ENCODE measurements at regions of chr15 and their contacts with region 1.

Region 1: DNA sequence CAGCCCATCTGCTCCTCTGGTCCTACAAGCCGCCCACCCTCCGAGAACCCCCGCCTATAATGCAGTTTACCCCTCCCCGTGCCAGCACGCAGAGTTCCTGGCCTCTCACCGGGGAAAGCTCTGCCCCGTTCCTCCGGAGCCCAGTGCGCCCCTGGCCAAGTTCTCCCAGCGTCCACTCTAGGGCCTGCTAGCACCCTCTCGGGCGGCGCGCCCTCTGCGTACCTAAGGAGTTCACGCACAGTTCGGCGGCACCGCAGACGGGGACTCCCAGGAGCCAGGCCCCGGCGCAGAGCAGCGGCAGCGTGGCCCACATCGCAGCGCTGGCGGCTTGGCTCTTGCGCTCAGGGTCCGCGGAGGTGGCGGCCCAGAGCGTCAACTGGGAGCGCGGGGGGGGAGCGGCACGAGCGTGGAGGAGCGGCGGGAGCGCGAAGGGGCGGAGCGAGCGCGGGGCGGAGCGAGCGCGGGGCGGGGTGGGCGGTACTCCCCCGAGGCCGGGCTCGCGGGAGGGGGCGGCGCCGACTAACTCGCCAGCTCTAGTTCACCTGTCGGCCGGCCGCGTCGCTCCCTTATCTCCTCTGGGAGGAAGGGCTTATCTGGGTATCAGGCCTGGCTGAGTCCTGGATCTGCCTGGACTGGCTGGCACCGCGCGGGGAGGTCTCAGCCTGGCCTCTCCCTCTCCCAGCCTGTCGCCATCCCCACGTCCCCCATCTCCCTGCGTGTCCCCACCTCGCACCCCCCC is at the start of gene CTSH:
- DNase-seq: peak; percentile 91
- ATAC-seq: peak; percentile 95
- H3K4me3 Mint-ChIP-seq: peak within 1 kb of the TSS; percentile 98
- H3K27ac Mint-ChIP-seq: peak within 1 kb of the TSS; percentile 89
- H3K4me1 Mint-ChIP-seq: peaks cover 40% of the 10 kb centered on the region
- H3K27me3 Mint-ChIP-seq: no peaks in the 10 kb centered on the region
- CTCF ChIP-seq: no peak
- total RNA-seq, gene CTSH: 721 and 762 TPM in 2 replicates

Region 2: GRCh38 chr15:78761891-78762385 is 182.9 kb before region 1 on chr15:
- CTCF ChIA-PET with region 1: no interaction called
- POLR2A ChIA-PET with region 1: interaction called, 10 read pairs
- intact Hi-C with region 1: no loop called
- DNase-seq: no peak
- ATAC-seq: no peak
- H3K4me3 Mint-ChIP-seq: peak overlapping the region; percentile 46
- H3K27ac Mint-ChIP-seq: peak overlapping the region; percentile 77
- H3K4me1 Mint-ChIP-seq: peaks cover 62% of the 10 kb centered on the region
- H3K27me3 Mint-ChIP-seq: no peaks in the 10 kb centered on the region
- CTCF ChIP-seq: no peak

Region 3: GRCh38 chr15:78859971-78860732 is 84.7 kb before region 1 on chr15:
- CTCF ChIA-PET with region 1: no interaction called
- POLR2A ChIA-PET with region 1: no interaction called
- intact Hi-C with region 1: no loop called
- DNase-seq: peak; percentile 53
- ATAC-seq: peak; percentile 91
- H3K4me3 Mint-ChIP-seq: peak overlapping the region; percentile 85
- H3K27ac Mint-ChIP-seq: peak overlapping the region; percentile 84
- H3K4me1 Mint-ChIP-seq: peaks cover 9% of the 10 kb centered on the region
- H3K27me3 Mint-ChIP-seq: no peaks in the 10 kb centered on the region
- CTCF ChIP-seq: no peak

Region 4: DNA sequence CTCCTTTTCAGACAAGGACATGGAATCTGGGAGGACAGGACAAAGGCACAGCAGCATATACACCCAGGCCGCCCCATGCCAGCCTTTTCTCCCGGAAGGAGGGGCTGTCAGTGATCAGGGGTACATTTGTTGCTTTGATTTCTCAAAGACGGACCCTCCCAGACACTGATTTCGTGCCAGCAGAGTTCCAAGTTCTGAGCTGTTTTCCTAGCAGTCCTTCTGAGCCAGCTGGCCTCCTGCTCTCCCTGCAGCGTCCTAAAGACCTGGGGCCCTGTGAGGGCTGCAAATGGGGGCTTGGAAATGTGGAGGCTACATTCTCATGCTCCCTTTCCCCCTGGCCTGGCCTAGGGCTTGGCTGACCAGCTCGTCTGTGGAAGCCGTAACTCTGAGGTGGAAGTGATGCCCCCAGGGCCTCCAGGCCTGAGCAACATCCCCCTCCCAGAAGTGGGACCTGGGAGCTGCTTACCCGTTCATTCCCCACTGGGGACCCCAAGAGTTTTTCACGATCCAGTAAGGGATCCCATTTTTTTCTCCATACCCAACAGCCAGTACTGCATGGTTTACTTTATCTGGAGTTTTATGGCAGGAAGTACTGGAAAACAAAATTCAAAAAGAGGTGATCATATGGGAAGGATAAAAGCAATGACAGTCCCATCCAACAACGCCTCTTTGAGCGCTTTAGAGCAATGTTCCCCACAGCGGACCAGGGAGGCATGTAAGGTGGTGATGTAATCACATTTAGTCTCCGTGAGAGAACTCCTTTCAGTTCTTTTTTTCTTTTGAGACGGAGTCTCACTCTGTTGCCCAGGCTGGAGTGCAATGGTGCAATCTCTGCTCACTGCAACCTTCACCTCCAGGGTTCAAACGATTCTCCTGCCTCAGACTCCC is 22.1 kb before region 1 on chr15:
- CTCF ChIA-PET with region 1: no interaction called
- POLR2A ChIA-PET with region 1: interaction called, 10 read pairs
- intact Hi-C with region 1: no loop called
- DNase-seq: no peak
- ATAC-seq: peak; percentile 49
- H3K4me3 Mint-ChIP-seq: no peak overlapping the region
- H3K27ac Mint-ChIP-seq: peak overlapping the region; percentile 61
- H3K4me1 Mint-ChIP-seq: peaks cover 13% of the 10 kb centered on the region
- H3K27me3 Mint-ChIP-seq: no peaks in the 10 kb centered on the region
- CTCF ChIP-seq: no peak

Region 5: GRCh38 chr15:79004336-79004735 is 59.5 kb after region 1 on chr15:
- CTCF ChIA-PET with region 1: interaction called, 4 read pairs
- POLR2A ChIA-PET with region 1: interaction called, 35 read pairs
- intact Hi-C with region 1: loop called (anchors 1 kb)
- DNase-seq: peak; percentile 43
- ATAC-seq: peak; percentile 87
- H3K4me3 Mint-ChIP-seq: peak overlapping the region; percentile 65
- H3K27ac Mint-ChIP-seq: peak overlapping the region; percentile 93
- H3K4me1 Mint-ChIP-seq: peaks cover 58% of the 10 kb centered on the region
- H3K27me3 Mint-ChIP-seq: no peaks in the 10 kb centered on the region
- CTCF ChIP-seq: no peak

Region 6: DNA sequence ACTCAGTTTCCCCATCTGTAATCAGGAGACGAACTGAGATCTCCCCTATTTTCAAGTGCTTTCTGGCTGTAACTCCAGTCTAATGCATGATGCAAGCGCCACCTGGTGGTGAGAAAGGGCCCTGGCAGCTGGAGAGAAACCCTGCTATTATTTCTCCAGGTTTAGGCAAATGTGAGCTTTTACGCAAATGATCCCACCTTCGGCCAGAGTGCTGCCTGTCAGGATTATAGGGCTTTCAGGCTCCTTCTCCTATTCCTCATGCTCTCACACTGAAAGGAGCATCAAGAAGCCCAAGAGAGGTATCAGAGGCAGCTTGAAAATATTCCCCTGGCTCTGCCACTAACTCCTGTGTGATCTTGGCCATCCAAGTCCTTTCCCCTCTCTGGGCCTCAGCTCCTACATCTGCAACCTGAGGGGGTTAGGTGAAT is 239.6 kb after region 1 on chr15:
- CTCF ChIA-PET with region 1: interaction called, 5 read pairs
- POLR2A ChIA-PET with region 1: interaction called, 17 read pairs
- intact Hi-C with region 1: no loop called
- DNase-seq: peak; percentile 51
- ATAC-seq: peak; percentile 56
- H3K4me3 Mint-ChIP-seq: no peak overlapping the region
- H3K27ac Mint-ChIP-seq: no peak overlapping the region
- H3K4me1 Mint-ChIP-seq: no peaks in the 10 kb centered on the region
- H3K27me3 Mint-ChIP-seq: peaks cover 9% of the 10 kb centered on the region
- CTCF ChIP-seq: peak; percentile 90